ENCODE measurements at regions of chr1 and their contacts with region 1.

Region 1: DNA sequence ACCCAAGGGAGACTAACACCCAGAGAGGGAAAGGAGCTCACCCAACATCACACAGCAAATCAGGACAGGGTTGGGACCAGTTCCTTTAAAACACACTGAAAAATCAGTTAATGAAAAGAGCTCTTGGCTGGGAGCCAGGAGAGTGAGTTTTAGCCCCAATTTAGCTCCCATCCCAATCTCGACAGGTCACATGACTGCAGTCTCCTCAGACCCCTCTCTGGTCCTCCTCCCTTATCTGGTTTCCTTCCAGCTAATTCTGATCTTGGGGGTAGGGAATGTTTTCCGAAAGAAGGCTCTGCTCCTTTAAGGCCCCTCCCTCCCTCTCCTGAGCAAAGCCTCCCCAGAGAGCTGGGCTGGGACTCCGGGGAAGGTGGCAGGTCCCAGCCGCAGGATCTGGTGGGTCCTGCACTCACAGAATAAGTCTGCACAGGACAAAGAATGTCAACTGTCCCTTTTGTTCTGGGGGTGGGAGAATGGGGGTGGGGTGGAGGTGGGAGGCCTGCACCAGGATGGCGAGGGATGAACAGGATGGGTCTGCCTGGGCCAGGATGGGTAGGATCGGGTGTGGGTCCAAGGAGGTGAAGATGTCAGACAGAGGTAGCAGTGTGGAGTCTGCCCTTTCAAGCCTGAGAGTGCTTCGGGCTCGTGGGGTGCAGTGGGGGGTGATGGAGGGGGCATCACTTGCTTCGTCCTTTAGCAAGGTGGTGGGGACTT is 57.2 kb upstream of the SSBP3 start:
- DNase-seq: no peak
- H3K4me3 ChIP-seq: no peak overlapping the region
- H3K27ac ChIP-seq: no peak overlapping the region
- H3K4me1 ChIP-seq: peaks cover 0 to 3% of the 10 kb centered on the region in 2 donors
- H3K27me3 ChIP-seq: no peaks in the 10 kb centered on the region
- CTCF ChIP-seq: no peak

Region 2: GRCh38 chr1:54421101-54421504 is 42.3 kb before region 1 on chr1:
- intact Hi-C with region 1: loop called (anchors 1 kb)
- DNase-seq: no peak
- H3K4me3 ChIP-seq: no peak overlapping the region
- H3K27ac ChIP-seq: no peak overlapping the region
- H3K4me1 ChIP-seq: no peaks in the 10 kb centered on the region
- H3K27me3 ChIP-seq: no peaks in the 10 kb centered on the region
- CTCF ChIP-seq: no peak

Region 3: DNA sequence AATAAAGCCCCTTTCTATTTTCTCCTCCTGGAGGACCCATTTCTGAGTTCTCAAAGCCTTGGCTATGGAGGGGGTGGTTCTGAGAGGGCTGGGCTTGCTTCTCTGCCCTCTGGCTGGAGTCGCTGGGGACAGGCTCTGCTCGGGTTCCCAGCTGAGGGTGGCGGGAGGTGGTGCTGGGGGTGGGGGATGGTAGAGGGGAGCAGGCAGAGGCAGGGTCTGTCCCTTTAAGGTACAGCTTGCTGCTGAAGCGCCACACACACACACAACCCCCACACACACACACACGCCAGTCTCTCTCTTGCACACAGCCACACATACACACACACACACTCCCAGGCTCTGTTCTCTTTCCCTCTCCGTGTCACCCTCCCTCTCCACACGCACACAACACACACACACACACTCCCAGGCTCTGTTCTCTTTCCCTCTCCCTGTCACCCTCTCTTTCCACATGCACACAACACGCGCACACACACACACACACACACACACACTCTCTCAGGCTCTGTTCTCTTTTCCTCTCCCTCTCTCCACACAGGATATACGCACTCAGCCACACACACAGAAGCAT is 12.6 kb after region 1 on chr1:
- intact Hi-C with region 1: no loop called
- DNase-seq: no peak
- H3K4me3 ChIP-seq: peak overlapping the region in 1 of 2 donors; percentile 63
- H3K27ac ChIP-seq: no peak overlapping the region
- H3K4me1 ChIP-seq: peaks cover 3 to 12% of the 10 kb centered on the region in 2 donors
- H3K27me3 ChIP-seq: no peaks in the 10 kb centered on the region
- CTCF ChIP-seq: no peak

Region 4: DNA sequence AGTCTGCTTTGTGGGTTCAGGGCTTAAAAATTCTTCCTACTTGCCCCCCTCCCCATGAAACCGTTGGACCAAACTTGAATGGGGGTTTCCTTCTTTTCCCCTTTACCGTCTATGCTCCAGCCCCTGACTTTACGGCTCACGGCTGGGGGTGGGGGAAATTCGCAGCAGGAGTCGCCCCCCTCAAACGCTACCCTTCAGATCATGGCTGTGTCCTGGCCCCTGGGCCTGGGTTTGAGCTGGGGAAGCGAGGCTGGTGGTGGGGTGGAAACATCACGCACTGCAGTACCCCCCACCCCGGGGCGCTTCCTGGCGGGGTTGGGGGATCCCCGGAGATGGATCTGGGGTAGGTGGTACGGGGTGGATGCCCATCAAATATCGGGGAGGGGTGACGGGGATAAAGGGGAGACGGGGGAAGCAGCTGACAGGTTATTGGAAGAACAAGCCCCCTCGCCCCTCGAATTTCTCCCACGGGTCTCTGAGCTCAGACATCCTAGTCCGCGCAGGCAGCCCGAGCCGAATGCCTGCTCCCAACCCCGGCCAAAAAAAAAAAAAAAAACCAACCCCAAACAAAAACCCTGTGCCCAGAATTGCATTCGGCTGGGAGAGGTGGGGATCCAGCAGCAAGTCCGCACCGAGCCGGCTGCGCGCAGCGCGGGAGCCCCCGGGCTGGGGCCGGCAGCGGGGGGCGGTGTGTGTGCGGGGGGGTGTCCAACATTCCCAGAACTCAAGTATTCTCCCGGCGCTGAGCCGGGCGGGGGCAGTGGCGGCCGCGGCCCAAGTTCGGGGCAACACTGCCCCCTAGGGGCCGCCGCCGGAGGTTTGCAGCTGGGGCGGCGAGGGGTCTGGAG is 25.6 kb after region 1 on chr1:
- intact Hi-C with region 1: no loop called
- DNase-seq: peak in 1 of 2 donors; percentile 92
- H3K4me3 ChIP-seq: peak overlapping the region; percentile 61 to 81
- H3K27ac ChIP-seq: peak overlapping the region; percentile 92 to 97
- H3K4me1 ChIP-seq: peaks cover 0 to 31% of the 10 kb centered on the region in 2 donors
- H3K27me3 ChIP-seq: no peaks in the 10 kb centered on the region
- CTCF ChIP-seq: peak; percentile 95 to 98 (median 96)

Region 5: DNA sequence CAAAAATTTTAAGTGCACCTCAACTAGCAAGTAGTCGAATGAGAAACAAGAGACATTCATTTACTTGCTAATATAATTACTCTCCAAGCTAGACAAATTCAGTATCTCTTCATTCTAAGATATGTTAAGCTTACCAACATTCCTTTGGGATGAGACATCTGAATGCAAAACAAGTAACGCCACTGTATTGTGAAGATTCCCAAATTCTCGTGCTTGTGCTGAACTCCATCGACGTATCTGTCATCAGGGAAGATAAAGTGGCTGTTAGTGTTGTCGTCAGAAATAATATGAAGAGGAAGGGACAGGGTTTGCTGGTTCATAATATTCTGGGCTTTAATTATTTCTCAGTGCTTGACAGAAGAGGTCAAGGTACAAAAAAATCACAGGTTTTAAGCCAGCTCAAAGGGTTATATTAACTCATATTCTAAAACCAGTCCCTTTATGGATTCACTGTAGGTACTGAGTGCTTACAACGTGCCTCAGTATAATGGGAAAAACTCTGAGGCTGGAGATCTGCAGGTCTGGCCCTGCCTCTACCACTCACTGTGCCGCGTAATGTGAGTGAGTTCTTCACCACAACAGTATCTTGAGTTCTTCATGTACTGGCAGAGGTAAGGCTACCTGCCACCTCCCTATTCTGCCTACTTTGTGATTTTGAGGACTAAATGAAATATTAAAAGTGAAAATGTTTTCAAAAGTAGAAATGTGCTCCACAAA is 617.9 kb after region 1 on chr1:
- intact Hi-C with region 1: no loop called
- DNase-seq: no peak
- H3K4me3 ChIP-seq: no peak overlapping the region
- H3K27ac ChIP-seq: no peak overlapping the region
- H3K4me1 ChIP-seq: no peaks in the 10 kb centered on the region
- H3K27me3 ChIP-seq: no peaks in the 10 kb centered on the region
- CTCF ChIP-seq: no peak